PC-9 (cell line): ENCODE measurements at regions of chr3 and their contacts with region 1.

Region 1: GRCh38 chr3:177563792-177564191 is 366.5 kb upstream of the TBL1XR1 start:
- DNase-seq: no peak
- H3K4me3 ChIP-seq: no peak overlapping the region
- H3K27ac ChIP-seq: no peak overlapping the region
- H3K4me1 ChIP-seq: no peaks in the 10 kb centered on the region; the same call in 1 of the 2 replicates
- H3K27me3 ChIP-seq: no peaks in the 10 kb centered on the region
- CTCF ChIP-seq: no peak

Region 2: DNA sequence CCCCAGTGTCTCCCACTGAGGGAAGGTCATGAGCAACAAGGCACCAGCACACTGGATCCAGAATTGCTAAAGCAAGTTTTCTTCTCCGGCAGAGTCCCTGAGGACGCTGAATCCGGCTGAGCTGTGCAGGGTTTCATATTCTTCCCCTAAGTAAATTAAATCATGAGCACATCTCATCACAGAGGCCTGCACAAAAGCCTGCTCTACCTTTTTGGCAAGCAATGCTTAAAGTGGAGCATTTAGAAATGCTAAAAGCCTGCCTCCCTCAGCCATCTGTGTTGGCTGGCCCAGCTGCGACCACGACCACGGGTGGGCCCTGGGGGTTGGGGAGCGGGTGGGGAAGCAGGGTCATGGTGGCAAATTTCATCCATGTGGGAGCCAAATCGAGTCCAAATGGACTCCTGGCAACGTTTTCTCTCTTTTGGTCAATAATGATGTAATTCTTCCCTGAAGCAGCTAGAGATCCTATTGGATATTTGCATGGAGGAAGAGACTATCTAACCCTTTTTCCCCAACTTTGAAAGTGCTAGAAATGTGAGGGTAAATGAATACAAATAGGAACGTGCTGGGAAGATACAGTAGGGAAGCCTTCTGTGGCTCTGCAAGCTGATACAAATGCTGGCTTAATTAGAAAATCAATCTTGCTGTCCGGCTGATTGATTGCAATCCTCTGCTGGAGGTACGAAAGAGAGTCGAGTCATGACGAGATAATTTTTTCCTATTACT is 166.3 kb after region 1 on chr3:
- CTCF ChIA-PET with region 1: interaction called, 18 read pairs
- POLR2A ChIA-PET with region 1: no interaction called
- intact Hi-C with region 1: no loop called
- DNase-seq: no peak
- H3K4me3 ChIP-seq: no peak overlapping the region
- H3K27ac ChIP-seq: no peak overlapping the region
- H3K4me1 ChIP-seq: peaks cover 10% of the 10 kb centered on the region
- H3K27me3 ChIP-seq: no peaks in the 10 kb centered on the region
- CTCF ChIP-seq: no peak

Region 3: DNA sequence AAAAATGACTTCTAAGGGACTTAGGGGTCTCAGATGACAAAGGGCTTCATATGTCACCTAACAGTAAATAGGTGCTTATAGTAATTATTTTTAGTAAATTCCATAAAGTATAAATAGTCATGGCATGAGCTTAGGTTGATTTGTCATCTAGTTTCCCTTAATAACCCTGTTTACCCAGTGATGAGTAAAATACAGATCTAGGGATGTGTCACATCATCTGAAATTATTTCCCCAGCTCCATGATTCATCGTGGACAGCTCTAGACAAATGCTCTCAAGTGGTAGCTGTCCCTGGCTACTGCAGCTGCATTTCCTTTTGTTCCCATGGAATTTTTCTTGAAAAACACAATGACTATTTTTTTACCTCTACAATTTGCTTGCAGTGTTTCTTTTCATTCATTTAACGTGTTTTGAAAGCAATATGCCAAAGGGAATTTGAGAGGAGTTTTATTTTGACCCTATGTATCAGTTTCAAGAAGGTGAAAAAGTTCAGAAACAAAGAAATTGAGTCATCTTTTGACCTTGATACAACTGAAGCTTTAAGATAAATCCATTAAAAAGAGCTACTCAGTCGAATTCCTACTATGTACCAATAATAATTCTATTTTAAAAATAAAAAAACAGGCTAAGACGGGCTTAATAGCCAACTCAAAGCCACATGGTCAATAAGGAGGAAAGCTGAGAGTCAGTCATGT is 1214.1 kb after region 1 on chr3:
- CTCF ChIA-PET with region 1: no interaction called
- POLR2A ChIA-PET with region 1: no interaction called
- intact Hi-C with region 1: no loop called
- DNase-seq: peak in 1 of 2 experiments; percentile 73
- H3K4me3 ChIP-seq: no peak overlapping the region
- H3K27ac ChIP-seq: no peak overlapping the region
- H3K4me1 ChIP-seq: peaks cover 8% of the 10 kb centered on the region; the same call in 1 of the 2 replicates
- H3K27me3 ChIP-seq: no peaks in the 10 kb centered on the region
- CTCF ChIP-seq: no peak